HEK293T (cell line): ENCODE measurements at regions of chr15 and their contacts with region 1.

Region 1: DNA sequence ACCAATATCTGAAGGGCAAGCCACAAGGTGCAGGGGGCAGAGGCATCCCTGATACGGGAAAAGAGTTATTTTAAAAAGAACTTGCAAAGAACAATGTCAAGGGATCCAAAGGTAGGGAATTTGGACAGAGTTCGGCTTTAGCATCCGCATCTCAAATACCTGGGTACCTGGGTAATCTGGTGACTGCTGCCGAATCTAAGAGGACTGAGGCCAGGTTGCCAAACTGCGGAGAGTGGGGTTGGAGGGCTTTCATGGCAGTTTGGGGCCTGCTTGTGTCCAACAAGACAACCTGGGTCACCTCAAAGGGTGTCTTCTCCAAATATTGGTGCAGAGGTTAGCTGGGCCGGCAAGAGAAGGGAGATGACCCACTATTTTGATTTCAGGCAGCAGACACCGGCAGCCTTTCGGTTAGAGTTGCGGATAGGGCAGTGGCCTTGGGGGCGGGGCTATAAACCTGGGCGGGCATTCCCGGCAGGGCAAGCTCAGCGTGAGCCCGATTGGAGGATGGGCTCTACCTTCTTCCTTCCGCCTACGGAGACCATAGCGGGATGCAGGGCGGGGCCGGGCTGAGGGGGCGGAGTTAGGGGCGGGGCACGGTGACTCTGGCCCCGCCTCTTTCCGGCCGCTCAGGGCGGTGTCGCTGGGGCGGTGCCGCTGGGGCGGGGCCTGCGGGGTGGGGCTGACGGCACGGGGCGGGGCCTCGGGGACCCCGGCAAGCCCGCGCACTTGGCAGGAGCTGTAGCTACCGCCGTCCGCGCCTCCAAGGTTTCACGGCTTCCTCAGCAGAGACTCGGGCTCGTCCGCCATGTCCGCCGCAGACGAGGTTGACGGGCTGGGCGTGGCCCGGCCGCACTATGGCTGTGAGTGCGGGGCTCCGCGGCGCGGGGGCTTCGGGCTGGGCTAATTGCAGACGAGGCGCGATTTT is at the start of gene IQGAP1:
- DNase-seq: peak; percentile 100

Region 2: GRCh38 chr15:89299896-89300295 is 1087.9 kb before region 1 on chr15:
- CTCF ChIA-PET with region 1: no interaction called
- POLR2A ChIA-PET with region 1: no interaction called
- DNase-seq: no peak

Region 3: DNA sequence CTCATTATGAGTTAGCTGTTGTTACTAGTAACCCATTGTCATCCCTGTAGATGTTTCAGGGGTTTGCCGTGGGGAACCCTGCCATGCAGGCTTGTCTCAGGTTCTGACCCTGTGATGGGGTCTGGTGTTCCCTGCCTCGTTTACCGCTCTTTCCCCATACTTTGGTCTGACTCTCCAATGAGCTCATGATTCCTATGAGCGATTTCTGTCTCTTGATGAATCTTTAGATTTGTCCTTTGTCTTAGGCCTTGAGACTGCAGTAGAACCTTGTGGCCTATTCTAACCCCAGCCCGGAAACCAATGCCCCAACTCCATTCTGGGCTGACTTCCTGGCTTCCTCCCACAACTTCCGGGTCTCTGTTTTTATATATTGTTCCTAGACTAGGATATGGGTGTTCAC is 11.0 kb before region 1 on chr15:
- CTCF ChIA-PET with region 1: no interaction called
- POLR2A ChIA-PET with region 1: interaction called, 12 read pairs
- DNase-seq: no peak

Region 4: GRCh38 chr15:90400406-90401314 is 12.9 kb after region 1 on chr15:
- CTCF ChIA-PET with region 1: no interaction called
- POLR2A ChIA-PET with region 1: interaction called, 36 read pairs
- DNase-seq: peak; percentile 82

Region 5: DNA sequence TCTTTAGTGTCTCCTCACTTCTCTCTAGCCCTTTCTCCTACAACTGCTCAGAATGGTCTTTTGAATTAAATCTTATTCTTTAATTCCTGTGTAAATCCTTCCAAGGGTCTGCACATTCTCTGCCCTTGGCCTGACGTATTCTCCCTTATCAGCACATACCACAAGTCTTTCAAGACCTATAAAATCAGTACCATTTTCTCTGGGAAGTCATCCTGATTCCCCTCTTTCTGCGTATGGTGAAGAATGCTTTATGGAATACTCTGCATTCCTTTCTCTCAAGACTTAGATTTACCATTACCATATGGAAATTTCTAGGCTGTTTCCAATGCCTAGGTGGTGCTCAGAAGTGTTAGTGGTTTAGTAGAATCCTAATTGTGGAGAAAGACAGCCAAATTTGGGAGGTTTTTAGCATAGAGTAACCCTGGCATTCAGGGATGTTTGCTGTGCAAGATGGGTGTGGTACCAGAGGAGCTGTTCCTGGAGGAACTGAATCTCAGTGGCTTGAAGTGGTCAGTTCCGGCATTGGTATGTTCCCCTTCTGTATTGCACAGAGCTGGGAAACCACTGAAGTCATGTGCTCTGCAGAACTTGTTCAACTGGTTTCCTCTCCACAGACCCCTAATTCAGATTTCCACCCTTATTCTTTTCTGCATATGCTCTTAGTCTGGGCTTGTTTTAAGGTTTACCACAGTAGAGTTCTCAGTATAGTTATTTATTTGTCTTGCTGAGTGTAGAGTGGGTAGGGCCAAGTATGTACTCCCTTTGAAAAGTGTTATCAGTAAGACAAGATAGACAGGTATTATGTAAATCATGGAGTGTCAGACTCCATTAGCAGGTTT is 24.8 kb after region 1 on chr15:
- CTCF ChIA-PET with region 1: no interaction called
- POLR2A ChIA-PET with region 1: interaction called, 17 read pairs
- DNase-seq: peak; percentile 14

Region 6: GRCh38 chr15:90436952-90437351 is 49.2 kb after region 1 on chr15:
- CTCF ChIA-PET with region 1: no interaction called
- POLR2A ChIA-PET with region 1: interaction called, 12 read pairs
- DNase-seq: no peak

Region 7: DNA sequence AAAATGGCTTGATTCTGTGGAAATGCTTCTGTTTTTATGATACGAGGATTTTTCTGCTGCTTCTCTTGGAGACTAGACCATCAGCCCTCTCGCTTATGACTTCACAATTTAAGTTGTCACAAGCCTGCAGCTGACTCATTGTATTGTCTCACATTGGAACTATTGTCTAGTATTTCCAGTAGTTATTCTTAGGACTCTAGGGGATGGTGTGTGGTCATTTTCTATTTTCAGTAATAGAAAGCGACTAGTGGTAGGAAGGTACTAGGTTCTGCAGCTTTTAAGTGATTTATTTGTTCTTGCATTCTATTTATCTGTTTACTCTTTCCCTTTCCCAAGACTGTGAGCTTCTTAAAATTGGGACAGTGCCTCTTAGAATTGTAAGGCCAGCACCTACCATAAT is 75.6 kb after region 1 on chr15:
- CTCF ChIA-PET with region 1: no interaction called
- POLR2A ChIA-PET with region 1: interaction called, 10 read pairs
- DNase-seq: no peak